ENCODE measurements at regions of chr14 and their contacts with region 1.

Region 1: GRCh38 chr14:23539248-23540140 is 12.1 kb downstream of the ZFHX2 start:
- DNase-seq: peak; percentile 59
- H3K4me3 ChIP-seq: no peak overlapping the region
- H3K27ac ChIP-seq: no peak overlapping the region
- H3K4me1 ChIP-seq: peaks cover 26% of the 10 kb centered on the region
- H3K27me3 ChIP-seq: no peaks in the 10 kb centered on the region
- CTCF ChIP-seq: peak; percentile 81

Region 2: DNA sequence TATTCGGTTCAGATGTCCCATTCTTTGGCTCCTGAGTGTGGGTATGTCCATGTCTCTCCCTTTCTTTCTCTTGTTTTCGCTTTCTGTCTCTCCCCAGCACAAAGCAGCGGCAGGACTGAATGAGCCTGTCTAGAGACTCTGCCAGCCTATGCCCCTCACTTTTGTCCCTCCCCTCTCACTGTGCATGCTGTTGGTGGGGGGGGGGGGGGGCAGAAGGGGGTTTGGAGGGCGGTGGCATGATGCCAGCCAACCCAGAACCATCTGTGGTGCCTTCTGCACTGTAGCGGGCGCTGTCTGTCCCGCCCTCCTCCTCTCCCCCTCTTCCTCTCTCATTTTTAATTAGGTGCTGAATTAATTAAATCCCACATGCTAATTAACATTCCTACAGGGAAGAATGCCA is 52.3 kb before region 1 on chr14:
- CTCF ChIA-PET with region 1: no interaction called
- POLR2A ChIA-PET with region 1: no interaction called
- intact Hi-C with region 1: loop called (anchors 5 kb)
- DNase-seq: no peak
- H3K4me3 ChIP-seq: no peak overlapping the region
- H3K27ac ChIP-seq: no peak overlapping the region
- H3K4me1 ChIP-seq: peaks cover 5% of the 10 kb centered on the region
- H3K27me3 ChIP-seq: no peaks in the 10 kb centered on the region
- CTCF ChIP-seq: no peak

Measured in A673 (cell line).